H1 (cell line): ENCODE measurements at regions of chr10 and their contacts with region 1.

Region 1: GRCh38 chr10:103637927-103638557 is 144.5 kb downstream of the NEURL1 start:
- DNase-seq: no peak
- H3K4me3 ChIP-seq: no peak overlapping the region
- H3K27ac ChIP-seq: no peak overlapping the region
- H3K4me1 ChIP-seq: peaks cover 8 to 35% (median 27%) of the 10 kb centered on the region in 4 experiments
- H3K27me3 ChIP-seq: no peaks in the 10 kb centered on the region
- CTCF ChIP-seq: no peak
- EP300 ChIP-seq: no peak
- POLR2A ChIP-seq: no peak
- RAD21 ChIP-seq: no peak

Region 2: GRCh38 chr10:103470761-103471653 is 167.0 kb before region 1 on chr10:
- CTCF ChIA-PET with region 1: no interaction called
- POLR2A ChIA-PET with region 1: no interaction called
- DNase-seq: no peak
- H3K4me3 ChIP-seq: no peak overlapping the region
- H3K27ac ChIP-seq: no peak overlapping the region
- H3K4me1 ChIP-seq: peaks cover 0 to 11% (median 2%) of the 10 kb centered on the region in 4 experiments; a peak in 2 of 7 replicates
- H3K27me3 ChIP-seq: no peaks in the 10 kb centered on the region
- CTCF ChIP-seq: no peak
- EP300 ChIP-seq: no peak
- POLR2A ChIP-seq: no peak
- RAD21 ChIP-seq: no peak

Region 3: GRCh38 chr10:103572347-103573204 is 65.5 kb before region 1 on chr10:
- CTCF ChIA-PET with region 1: no interaction called
- POLR2A ChIA-PET with region 1: no interaction called
- DNase-seq: no peak
- H3K4me3 ChIP-seq: no peak overlapping the region
- H3K27ac ChIP-seq: no peak overlapping the region
- H3K4me1 ChIP-seq: no peaks in the 10 kb centered on the region
- H3K27me3 ChIP-seq: no peaks in the 10 kb centered on the region
- CTCF ChIP-seq: no peak
- EP300 ChIP-seq: no peak
- POLR2A ChIP-seq: no peak
- RAD21 ChIP-seq: no peak

Region 4: GRCh38 chr10:103652599-103653281 is 14.7 kb after region 1 on chr10:
- CTCF ChIA-PET with region 1: interaction called, 185 read pairs
- POLR2A ChIA-PET with region 1: interaction called, 20 read pairs
- DNase-seq: no peak
- H3K4me3 ChIP-seq: no peak overlapping the region
- H3K27ac ChIP-seq: no peak overlapping the region
- H3K4me1 ChIP-seq: peaks cover 0 to 32% (median 19%) of the 10 kb centered on the region in 4 experiments; a peak in 6 of 7 replicates
- H3K27me3 ChIP-seq: no peaks in the 10 kb centered on the region
- CTCF ChIP-seq: no peak
- EP300 ChIP-seq: no peak
- POLR2A ChIP-seq: no peak
- RAD21 ChIP-seq: no peak

Region 5: DNA sequence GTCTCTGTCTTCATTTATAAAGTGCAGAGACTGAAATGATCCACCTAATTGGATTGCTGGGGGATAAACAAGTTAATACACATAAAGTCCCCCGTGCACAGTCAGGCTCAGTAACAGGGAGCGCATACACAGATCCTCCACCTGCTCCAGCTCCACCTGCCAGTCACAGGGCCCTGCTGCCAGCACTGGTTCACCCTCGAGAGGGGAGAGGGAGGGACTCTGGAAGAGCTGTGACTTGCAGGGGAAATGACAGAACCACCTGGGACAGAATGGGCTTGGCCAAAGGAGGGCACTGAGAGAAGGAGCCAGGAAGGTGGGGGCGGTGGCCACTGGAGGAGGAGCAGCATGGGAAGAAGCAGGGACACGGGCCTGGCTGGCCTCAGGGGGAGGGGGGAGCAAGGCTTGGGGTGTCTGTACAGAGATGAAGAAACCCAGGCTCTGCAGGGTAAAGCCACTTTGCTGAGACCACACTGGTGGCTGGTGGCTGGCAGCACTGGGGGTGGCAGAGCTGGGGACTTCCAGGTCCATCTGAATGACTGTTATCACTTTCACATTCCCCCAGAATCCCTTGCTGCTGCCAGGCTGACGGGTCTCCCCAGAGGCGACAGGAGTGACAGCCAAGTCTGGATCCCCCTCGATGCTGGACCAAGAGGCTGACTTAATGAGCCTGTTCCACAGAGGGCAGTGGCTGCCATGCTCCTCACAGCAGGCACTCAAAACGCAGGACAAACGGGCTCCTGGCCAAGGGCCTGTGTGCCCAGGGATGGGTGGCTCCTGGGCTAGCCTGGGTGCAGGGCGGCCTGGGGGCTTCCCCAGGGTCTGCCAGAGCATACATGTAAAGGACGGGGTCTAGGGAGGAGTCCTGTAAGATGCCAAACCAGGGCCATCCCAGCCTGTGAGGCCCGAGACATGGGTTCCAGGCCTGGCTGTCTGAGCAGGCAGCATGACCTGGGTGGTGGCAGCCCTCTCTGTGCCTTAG is 66.2 kb after region 1 on chr10:
- CTCF ChIA-PET with region 1: no interaction called
- POLR2A ChIA-PET with region 1: no interaction called
- DNase-seq: no peak
- H3K4me3 ChIP-seq: no peak overlapping the region
- H3K27ac ChIP-seq: no peak overlapping the region
- H3K4me1 ChIP-seq: peaks cover 0 to 2% (median 0%) of the 10 kb centered on the region in 4 experiments; a peak in 2 of 7 replicates
- H3K27me3 ChIP-seq: no peaks in the 10 kb centered on the region
- CTCF ChIP-seq: no peak
- EP300 ChIP-seq: no peak
- POLR2A ChIP-seq: no peak
- RAD21 ChIP-seq: no peak